ENCODE measurements at regions of chr7 and their contacts with region 1.

Region 1: DNA sequence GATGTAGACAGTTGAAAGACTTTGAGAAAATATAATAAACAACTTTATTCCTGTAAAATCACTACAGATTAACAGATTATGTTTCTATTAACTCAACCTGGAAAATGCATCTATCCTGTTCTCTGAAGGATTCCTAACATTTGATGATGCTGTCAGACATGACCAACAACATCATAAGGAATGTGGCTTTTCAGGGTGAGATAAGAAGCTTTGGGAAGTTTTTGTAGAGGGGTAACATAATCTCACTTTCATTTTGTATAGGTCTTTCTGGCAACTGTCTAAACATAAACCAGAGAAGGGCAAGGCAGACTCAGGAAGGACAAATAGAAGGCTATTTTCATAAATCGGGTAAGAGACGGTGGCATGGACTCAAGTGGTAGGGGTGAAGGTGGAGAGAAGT is 112.2 kb downstream of the TES start:
- DNase-seq: no peak
- H3K4me3 Mint-ChIP-seq: no peak overlapping the region
- H3K27ac Mint-ChIP-seq: no peak overlapping the region
- H3K4me1 Mint-ChIP-seq: no peaks in the 10 kb centered on the region
- H3K27me3 Mint-ChIP-seq: peaks cover 19% of the 10 kb centered on the region

Region 2: DNA sequence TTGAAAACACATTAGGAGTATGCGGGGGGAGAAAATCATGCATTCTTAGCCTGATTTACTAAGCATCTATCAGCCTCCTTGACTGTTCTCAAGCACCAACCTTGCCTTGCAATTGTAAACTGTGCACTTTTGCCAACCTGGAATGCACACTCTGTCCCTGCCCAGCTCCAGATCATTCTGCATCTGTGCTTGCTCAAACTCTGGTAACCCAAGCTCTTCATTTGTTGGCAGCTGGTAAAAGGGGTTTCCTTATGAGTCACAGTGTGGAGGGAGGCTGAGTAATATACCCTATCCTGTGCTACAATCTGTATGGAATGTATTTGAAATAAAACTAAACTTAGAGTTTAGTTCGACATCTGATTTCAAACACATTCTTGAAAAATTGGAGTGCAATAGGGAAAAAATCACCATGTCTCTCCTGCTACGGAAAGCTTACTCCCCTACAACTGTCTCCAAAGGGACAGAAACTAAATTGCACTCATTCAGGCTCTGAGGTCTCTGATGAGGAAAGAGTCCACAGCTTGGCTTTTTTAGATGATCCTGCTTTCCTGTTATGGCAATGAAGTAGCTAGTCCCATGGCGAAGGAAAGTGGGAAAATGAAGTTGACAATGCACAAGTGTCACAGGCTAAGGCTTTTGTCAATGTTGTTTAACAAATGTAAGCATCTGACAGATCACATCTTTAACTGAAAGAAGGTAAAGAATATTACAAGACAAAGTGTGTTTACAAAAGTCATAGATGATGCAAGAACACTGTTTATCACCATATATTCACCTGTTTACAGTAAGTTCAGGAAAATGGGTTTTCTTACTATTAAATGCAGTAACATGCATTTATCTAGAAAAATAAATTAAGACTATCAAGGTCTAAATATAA is 50.3 kb before region 1 on chr7:
- intact Hi-C with region 1: loop called (anchors 5 kb)
- DNase-seq: peak; percentile 33
- H3K4me3 Mint-ChIP-seq: no peak overlapping the region
- H3K27ac Mint-ChIP-seq: no peak overlapping the region
- H3K4me1 Mint-ChIP-seq: no peaks in the 10 kb centered on the region
- H3K27me3 Mint-ChIP-seq: peaks cover 39% of the 10 kb centered on the region